HEK293 (cell line): ENCODE measurements at regions of chr1 and their contacts with region 1.

Region 1: GRCh38 chr1:8439015-8439702 is 121.2 kb downstream of the SLC45A1 start:
- H3K4me3 ChIP-seq: no peak overlapping the region
- H3K27ac ChIP-seq: no peak overlapping the region
- H3K4me1 ChIP-seq: peaks cover 7% of the 10 kb centered on the region; the same call in 1 of the 2 replicates
- CTCF ChIP-seq: no peak; the same call in 1 of the 2 replicates

Region 2: GRCh38 chr1:7808253-7808844 is 630.8 kb before region 1 on chr1:
- CTCF ChIA-PET with region 1: no interaction called
- POLR2A ChIA-PET with region 1: no interaction called
- H3K4me3 ChIP-seq: no peak overlapping the region
- H3K27ac ChIP-seq: no peak overlapping the region
- H3K4me1 ChIP-seq: no peaks in the 10 kb centered on the region
- CTCF ChIP-seq: 0 out of 2 replicates have a peak, but pooled peaks have one; percentile 18

Region 3: DNA sequence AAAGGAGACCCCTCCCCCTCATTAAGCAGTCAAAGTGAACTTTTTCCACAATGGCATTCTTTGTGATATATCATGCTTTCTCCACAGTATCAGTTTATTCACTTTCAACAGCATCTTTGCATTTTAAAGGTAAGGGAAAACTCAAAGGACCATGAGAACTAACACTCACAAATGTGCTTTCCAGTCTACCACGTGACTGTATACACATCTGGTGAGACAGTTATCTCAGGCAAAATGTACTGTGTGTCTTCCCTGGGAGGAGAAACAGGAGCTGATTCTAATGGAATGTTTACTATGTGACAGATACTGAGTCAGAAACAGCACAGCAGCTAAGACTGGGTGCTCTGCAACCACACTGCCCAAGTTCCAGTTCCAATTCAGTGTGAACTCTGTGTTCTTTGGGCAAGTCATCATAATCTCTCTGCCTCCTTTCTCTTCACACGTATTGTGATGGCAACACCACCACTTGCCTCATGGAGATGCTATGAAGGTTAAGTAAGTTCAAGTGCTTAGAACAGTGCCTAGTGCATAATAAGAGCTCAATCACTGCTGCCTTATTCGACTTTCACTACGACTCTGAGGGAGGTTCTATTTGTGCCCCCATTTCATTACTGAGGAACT is 42.3 kb before region 1 on chr1:
- CTCF ChIA-PET with region 1: no interaction called
- POLR2A ChIA-PET with region 1: no interaction called
- H3K4me3 ChIP-seq: no peak overlapping the region
- H3K27ac ChIP-seq: no peak overlapping the region
- H3K4me1 ChIP-seq: peaks cover 15% of the 10 kb centered on the region; the same call in 1 of the 2 replicates
- CTCF ChIP-seq: no peak

Region 4: DNA sequence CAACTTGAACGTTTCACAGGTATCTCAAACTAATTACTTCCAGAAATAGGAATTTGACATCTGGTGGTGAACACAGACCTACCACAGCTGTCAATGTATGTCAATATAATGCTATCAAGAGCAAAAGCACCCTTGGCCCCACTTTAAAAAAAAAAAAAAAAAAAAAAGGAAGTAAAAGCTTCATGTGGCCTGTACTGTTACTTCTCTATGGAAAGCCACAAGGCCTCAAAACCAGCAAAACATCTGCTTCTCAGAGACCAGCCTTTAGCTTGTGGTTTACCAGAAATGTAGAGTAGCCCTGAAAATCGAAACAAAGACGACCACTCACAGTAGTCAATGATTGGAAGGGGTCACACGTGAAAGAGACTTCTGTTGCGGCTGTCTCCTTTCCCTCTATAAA is 11.7 kb before region 1 on chr1:
- CTCF ChIA-PET with region 1: interaction called, 10 read pairs
- POLR2A ChIA-PET with region 1: interaction called, 6 read pairs
- H3K4me3 ChIP-seq: no peak overlapping the region
- H3K27ac ChIP-seq: no peak overlapping the region
- H3K4me1 ChIP-seq: no peaks in the 10 kb centered on the region
- CTCF ChIP-seq: no peak

Region 5: GRCh38 chr1:8497210-8497801 is 58.1 kb after region 1 on chr1:
- CTCF ChIA-PET with region 1: no interaction called
- POLR2A ChIA-PET with region 1: no interaction called
- H3K4me3 ChIP-seq: no peak overlapping the region
- H3K27ac ChIP-seq: no peak overlapping the region
- H3K4me1 ChIP-seq: no peaks in the 10 kb centered on the region
- CTCF ChIP-seq: no peak